ENCODE measurements at regions of chr21 and their contacts with region 1.

Region 1: GRCh38 chr21:42097860-42098454 is 26.8 kb downstream of the UMODL1 start:
- DNase-seq: peak; percentile 89 to 98 (median 94)
- H3K4me3 ChIP-seq: no peak overlapping the region
- H3K4me3 Mint-ChIP-seq: no peak overlapping the region
- H3K27ac ChIP-seq: peak overlapping the region; percentile 57 to 77
- H3K27ac Mint-ChIP-seq: peak overlapping the region; percentile 87 to 99 (median 89)
- H3K4me1 ChIP-seq: peaks cover 12 to 14% of the 10 kb centered on the region in 2 donors
- H3K4me1 Mint-ChIP-seq: peaks cover 18% of the 10 kb centered on the region
- H3K27me3 ChIP-seq: no peaks in the 10 kb centered on the region
- H3K27me3 Mint-ChIP-seq: peaks cover 1 to 6% (median 3%) of the 10 kb centered on the region in 3 donors
- CTCF ChIP-seq: no peak

Region 2: GRCh38 chr21:42062236-42063022 is 35.5 kb before region 1 on chr21:
- intact Hi-C with region 1: loop called in 1 of 2 experiments (anchors 5 kb)
- DNase-seq: peak; percentile 55 to 72 (median 64)
- H3K4me3 ChIP-seq: peak overlapping the region in 2 of 3 experiments; percentile 19 to 72
- H3K4me3 Mint-ChIP-seq: peak overlapping the region; percentile 61 to 85
- H3K27ac ChIP-seq: peak overlapping the region; percentile 90 to 95
- H3K27ac Mint-ChIP-seq: peak overlapping the region; percentile 93 to 97 (median 94)
- H3K4me1 ChIP-seq: peaks cover 67 to 73% of the 10 kb centered on the region in 2 donors
- H3K4me1 Mint-ChIP-seq: peaks cover 74% of the 10 kb centered on the region
- H3K27me3 ChIP-seq: no peaks in the 10 kb centered on the region
- H3K27me3 Mint-ChIP-seq: peaks cover 0 to 4% (median 2%) of the 10 kb centered on the region in 3 donors
- CTCF ChIP-seq: no peak